ENCODE measurements at regions of chr7 and their contacts with region 1.

Region 1: GRCh38 chr7:23404546-23405239 is 65.6 kb downstream of the IGF2BP3 start:
- DNase-seq: no peak
- H3K4me3 Mint-ChIP-seq: peak overlapping the region; percentile 14
- H3K27ac Mint-ChIP-seq: peak overlapping the region; percentile 91
- H3K4me1 Mint-ChIP-seq: peaks cover 22% of the 10 kb centered on the region
- H3K27me3 Mint-ChIP-seq: no peaks in the 10 kb centered on the region

Region 2: GRCh38 chr7:23347682-23348180 is 57.0 kb before region 1 on chr7:
- intact Hi-C with region 1: loop called (anchors 2 kb)
- DNase-seq: no peak
- H3K4me3 Mint-ChIP-seq: peak overlapping the region; percentile 53
- H3K27ac Mint-ChIP-seq: peak overlapping the region; percentile 64
- H3K4me1 Mint-ChIP-seq: peaks cover 50% of the 10 kb centered on the region
- H3K27me3 Mint-ChIP-seq: no peaks in the 10 kb centered on the region

Region 3: DNA sequence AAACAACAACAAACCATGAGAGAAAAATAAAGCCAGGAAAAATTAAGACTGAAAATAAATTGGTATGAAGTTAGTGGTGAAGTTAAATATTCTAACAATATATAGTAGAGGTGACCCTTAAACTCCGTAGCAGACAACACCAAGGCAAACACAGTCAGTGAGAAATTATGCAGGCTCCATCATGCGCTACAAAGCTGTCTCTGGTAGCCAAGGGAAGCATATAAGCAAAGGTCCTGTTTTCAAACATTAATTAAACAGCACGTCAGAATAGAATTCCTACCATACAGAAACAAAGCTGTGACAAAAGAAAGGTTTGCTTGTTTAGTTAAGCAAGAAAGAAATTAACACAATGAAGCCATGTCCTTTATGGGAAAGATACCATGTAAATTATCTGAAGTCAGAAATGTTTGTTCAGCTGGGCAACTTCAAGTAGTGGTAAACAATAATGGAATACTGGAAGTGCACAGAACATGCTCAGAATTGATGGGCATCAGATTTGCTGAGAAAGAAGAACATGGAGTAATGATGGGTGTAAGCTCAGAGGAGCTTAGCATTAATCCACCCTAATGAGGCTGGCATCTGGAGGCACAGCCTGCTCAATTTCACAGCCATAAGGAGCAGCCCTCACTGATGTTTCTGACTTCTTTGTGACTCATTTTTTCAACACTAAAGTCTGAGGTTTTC is 10.1 kb before region 1 on chr7:
- intact Hi-C with region 1: loop called (anchors 1 kb)
- DNase-seq: no peak
- H3K4me3 Mint-ChIP-seq: no peak overlapping the region
- H3K27ac Mint-ChIP-seq: no peak overlapping the region
- H3K4me1 Mint-ChIP-seq: peaks cover 17% of the 10 kb centered on the region
- H3K27me3 Mint-ChIP-seq: no peaks in the 10 kb centered on the region

Region 4: GRCh38 chr7:23431702-23432199 is 27.1 kb after region 1 on chr7:
- intact Hi-C with region 1: loop called (anchors 2 kb)
- DNase-seq: no peak
- H3K4me3 Mint-ChIP-seq: no peak overlapping the region
- H3K27ac Mint-ChIP-seq: no peak overlapping the region
- H3K4me1 Mint-ChIP-seq: peaks cover 44% of the 10 kb centered on the region
- H3K27me3 Mint-ChIP-seq: no peaks in the 10 kb centered on the region

Measured in activated T-helper 2 cell treated with anti-CD3 and anti-CD28 coated beads, Interferon-gamma antibody, Interleukin-2, Interleukin-4, amounts not matched to agents 10 μg/mL and 5 μg/mL and 100 μg/mL, durations not matched to agents 14 hours and 24 hours and 36 hours (primary cell).